SK-N-SH (cell line): ENCODE measurements at regions of chr20 and their contacts with region 1.

Region 1: DNA sequence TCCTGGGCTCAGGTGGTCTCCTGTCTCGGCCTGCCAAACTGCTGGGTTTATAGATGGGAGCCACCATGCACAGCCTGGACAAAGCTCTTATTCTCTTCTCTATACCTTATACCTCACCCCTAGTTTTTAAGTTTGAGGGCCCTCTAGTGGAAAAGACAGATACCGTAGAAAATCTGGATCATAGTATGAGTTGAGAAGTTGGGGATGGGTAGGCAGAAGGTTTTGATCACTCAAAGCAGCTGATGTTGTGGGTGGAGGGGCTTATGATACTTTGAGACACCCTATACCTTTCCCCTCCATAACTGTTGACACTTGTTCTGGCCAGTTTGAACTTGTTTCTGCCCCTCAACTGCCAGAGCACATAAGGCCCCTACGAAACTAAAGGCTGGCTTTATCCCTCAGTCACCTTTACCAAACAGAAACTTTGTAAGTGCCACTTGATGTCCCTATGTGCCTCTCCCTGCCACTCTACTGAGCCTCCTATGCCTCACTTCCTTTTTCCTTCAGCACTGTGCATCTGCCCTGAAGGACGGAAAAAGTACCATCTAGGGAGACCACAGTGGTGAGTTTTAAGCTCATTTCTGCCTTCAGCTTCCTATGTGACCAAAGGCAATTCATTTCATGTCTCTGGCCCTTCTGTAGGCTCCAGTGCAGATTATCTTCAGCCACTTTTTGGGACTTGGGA is 28.6 kb downstream of the RALY start:
- DNase-seq: peak; percentile 66
- H3K4me3 ChIP-seq: no peak overlapping the region
- H3K27ac ChIP-seq: no peak overlapping the region
- H3K4me1 ChIP-seq: peaks cover 9 to 45% of the 10 kb centered on the region in 2 experiments; a peak in 3 of 4 replicates
- H3K27me3 ChIP-seq: no peaks in the 10 kb centered on the region
- CTCF ChIP-seq: peak; percentile 56
- EP300 ChIP-seq: no peak
- RAD21 ChIP-seq: peak; percentile 73

Region 2: DNA sequence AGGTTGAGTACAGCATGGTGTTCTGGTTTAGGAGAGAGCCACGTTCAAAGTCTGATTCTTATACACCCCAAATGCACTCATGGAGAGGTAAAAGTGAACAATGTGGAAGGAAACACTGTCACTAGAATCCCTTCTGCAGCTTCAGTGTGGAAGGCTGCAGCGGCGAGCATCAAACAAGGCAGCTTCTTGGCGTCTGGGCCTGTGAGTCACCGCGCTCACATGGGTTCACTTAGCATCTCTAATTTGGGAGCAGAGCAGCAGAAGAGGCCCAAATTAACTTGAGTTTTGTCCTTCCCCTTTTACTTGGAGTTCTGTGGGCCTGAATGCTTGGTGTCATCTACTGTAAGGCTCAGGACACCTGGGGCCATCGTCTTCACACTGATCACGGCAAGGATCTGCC is 325.2 kb before region 1 on chr20:
- CTCF ChIA-PET with region 1: no interaction called
- POLR2A ChIA-PET with region 1: no interaction called
- DNase-seq: peak; percentile 42
- H3K4me3 ChIP-seq: no peak overlapping the region
- H3K27ac ChIP-seq: peak overlapping the region; percentile 72 to 94; a peak in 3 of 4 replicates
- H3K4me1 ChIP-seq: peaks cover 4 to 24% of the 10 kb centered on the region in 2 experiments; a peak in 3 of 4 replicates
- H3K27me3 ChIP-seq: no peaks in the 10 kb centered on the region
- CTCF ChIP-seq: no peak
- EP300 ChIP-seq: no peak
- RAD21 ChIP-seq: no peak

Region 3: GRCh38 chr20:33992923-33993575 is 29.2 kb before region 1 on chr20:
- CTCF ChIA-PET with region 1: interaction called, 13 read pairs
- POLR2A ChIA-PET with region 1: interaction called, 9 read pairs
- DNase-seq: peak; percentile 96
- H3K4me3 ChIP-seq: peak overlapping the region; percentile 88 to 89
- H3K27ac ChIP-seq: peak overlapping the region; percentile 94 to 96
- H3K4me1 ChIP-seq: peaks cover 21 to 23% of the 10 kb centered on the region in 2 experiments; a peak in 3 of 4 replicates
- H3K27me3 ChIP-seq: no peaks in the 10 kb centered on the region
- CTCF ChIP-seq: no peak
- EP300 ChIP-seq: no peak
- RAD21 ChIP-seq: no peak